ENCODE measurements at regions of chr9 and their contacts with region 1.

Region 1: DNA sequence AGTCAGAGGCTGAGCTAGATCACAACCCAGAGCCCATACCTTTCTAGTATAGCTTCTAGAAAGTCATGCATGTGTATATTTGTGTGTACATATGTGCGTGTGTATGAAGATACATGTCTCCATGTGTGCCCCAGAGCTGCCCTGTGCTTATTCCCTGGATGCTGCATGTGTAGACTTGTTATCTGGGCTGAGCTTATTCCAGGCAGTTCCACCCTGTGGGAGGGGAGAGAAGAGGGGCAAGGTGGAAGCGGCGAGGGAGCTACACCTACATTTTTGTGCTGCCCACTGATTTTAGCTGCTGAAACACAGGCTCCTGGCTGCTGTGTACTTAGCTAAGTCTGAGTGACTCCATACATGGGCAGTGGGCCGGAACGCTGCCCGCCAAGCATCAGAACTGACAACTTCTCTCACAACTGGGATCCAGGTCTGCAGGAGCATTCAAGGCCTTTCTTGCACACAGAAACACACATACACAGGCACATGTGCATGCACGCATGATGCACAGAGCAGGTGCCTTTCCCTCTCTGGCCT is 38.0 kb upstream of the XPA start:
- DNase-seq: no peak
- H3K4me3 ChIP-seq: no peak overlapping the region
- H3K27ac ChIP-seq: no peak overlapping the region
- H3K4me1 ChIP-seq: no peaks in the 10 kb centered on the region
- H3K27me3 ChIP-seq: peaks cover 0 to 6% (median 5%) of the 10 kb centered on the region in 4 experiments; a peak in 5 of 7 replicates
- CTCF ChIP-seq: no peak
- EP300 ChIP-seq: no peak
- POLR2A ChIP-seq: no peak
- RAD21 ChIP-seq: no peak

Region 2: DNA sequence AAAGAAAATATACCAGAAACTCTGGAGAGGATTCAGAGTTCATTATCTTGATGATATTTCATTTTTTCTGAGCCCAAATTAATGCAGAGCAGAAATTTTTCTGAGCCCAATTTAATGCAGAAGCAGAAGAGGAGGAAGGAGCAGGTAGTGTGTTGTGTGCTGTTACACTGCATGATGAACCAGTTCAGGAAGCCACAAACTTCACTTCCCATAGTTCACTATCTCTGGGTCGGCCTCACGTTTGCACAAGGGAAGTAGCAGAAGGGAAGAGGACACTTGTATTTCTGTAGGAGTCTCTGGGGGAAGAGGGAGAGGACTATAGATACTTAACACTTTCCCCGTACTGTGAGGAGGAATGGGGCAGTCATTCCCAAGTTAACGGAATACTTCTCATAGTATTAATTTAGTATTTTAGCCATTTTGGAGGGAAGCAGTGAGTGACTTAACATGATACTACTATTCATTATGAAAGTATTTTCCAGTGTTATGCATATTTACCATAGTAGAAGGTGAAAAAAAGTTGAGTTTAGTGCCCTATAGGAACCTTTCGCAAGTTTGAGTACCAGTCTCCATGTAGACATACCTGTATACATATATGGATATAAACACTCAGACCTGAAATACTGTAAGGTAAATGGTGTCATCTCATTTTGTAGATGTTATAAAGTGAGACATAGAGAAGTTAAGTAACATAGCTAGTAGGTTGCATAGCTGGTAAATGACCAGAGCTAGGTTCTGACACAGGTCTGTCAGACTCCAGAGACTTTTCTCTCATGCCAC is 68.0 kb before region 1 on chr9:
- CTCF ChIA-PET with region 1: no interaction called
- POLR2A ChIA-PET with region 1: no interaction called
- DNase-seq: no peak
- H3K4me3 ChIP-seq: no peak overlapping the region
- H3K27ac ChIP-seq: no peak overlapping the region
- H3K4me1 ChIP-seq: no peaks in the 10 kb centered on the region
- H3K27me3 ChIP-seq: no peaks in the 10 kb centered on the region
- CTCF ChIP-seq: no peak
- EP300 ChIP-seq: no peak
- POLR2A ChIP-seq: no peak
- RAD21 ChIP-seq: no peak

Region 3: GRCh38 chr9:97721396-97721795 is 13.7 kb before region 1 on chr9:
- CTCF ChIA-PET with region 1: interaction called, 11 read pairs
- POLR2A ChIA-PET with region 1: no interaction called
- DNase-seq: no peak
- H3K4me3 ChIP-seq: no peak overlapping the region
- H3K27ac ChIP-seq: no peak overlapping the region
- H3K4me1 ChIP-seq: no peaks in the 10 kb centered on the region
- H3K27me3 ChIP-seq: no peaks in the 10 kb centered on the region
- CTCF ChIP-seq: no peak
- EP300 ChIP-seq: no peak
- POLR2A ChIP-seq: no peak
- RAD21 ChIP-seq: no peak

Region 4: DNA sequence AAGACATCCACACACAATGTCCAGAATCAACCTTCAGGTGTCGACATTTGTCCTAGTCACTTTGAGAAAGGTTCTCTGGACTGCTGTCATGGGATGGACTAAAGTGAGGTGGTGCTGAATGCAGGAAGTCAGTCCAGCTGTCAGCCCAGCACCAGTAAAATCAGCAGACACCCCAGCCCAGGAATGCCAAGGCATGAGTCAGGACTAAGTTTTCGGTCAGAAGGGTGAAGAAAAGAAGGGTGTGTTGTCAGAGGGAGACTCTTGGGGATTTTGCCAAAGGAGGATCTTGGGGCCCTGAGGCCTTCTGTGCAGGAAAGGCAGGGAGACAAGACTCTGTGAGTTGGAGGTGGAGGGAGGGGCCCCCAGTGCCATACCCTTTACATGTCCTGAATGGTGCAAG is 31.0 kb after region 1 on chr9:
- CTCF ChIA-PET with region 1: no interaction called
- POLR2A ChIA-PET with region 1: no interaction called
- DNase-seq: no peak
- H3K4me3 ChIP-seq: no peak overlapping the region
- H3K27ac ChIP-seq: no peak overlapping the region
- H3K4me1 ChIP-seq: no peaks in the 10 kb centered on the region
- H3K27me3 ChIP-seq: no peaks in the 10 kb centered on the region; a peak in 1 of 7 replicates
- CTCF ChIP-seq: no peak
- EP300 ChIP-seq: no peak
- POLR2A ChIP-seq: no peak
- RAD21 ChIP-seq: no peak